ENCODE measurements at regions of chr5 and their contacts with region 1.

Region 1: DNA sequence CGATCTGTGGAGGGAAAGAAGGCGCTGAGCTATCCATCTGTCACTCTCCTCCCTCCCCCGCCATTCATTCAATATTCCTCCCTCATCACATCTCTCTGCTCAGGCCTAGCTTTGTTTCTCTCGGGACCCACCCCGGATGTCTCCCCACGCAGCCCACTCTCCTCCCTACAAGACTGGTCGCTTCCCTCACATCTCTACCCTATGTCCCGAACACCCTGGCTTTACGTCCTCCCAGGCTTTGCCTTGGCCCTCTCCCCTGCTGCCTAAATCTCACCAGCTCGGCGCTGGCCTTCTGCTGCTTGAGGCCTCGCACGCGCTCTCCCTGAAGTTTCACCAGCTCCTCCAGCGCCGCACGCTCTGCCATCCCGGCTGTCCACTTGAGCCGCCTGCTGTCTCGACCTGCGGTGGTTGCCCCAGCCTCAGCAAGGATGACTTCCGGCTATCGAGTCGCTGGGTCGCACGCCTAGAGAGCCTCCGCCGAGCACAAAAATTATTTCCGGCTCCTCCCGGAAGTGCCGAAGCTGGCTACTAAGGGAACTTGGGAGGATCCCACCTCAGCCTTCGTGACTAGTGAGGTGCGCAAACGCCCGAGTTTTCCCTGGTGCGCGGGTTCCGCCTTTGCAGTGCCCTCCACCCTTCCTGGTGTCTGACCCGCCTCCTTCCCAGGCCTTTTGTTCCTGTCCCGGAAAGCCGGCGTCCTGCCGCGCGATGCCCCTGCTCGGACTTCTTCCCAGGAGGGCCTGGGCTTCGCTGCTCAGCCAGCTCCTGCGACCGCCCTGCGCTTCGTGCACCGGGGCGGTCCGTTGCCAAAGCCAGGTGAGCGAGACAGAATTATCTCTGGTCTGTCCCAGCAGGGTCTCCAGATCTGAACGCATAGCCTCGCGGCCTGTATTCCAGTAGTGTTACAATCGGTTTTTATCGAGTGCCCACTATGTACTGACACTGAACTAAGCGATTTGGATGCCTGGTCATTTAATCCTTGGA is at the starts of genes HARS1 and HARS2:
- DNase-seq: peak; percentile 93
- H3K4me3 ChIP-seq: peak within 1 kb of the TSS; percentile 48 to 87 (median 76)
- H3K27ac ChIP-seq: peak within 1 kb of the TSS; percentile 80 to 88 (median 83)
- H3K4me1 ChIP-seq: peaks cover 0 to 35% (median 26%) of the 10 kb centered on the region in 4 donors
- H3K27me3 ChIP-seq: no peaks in the 10 kb centered on the region
- CTCF ChIP-seq: no peak
- EP300 ChIP-seq: no peak
- POLR2A ChIP-seq: peak; percentile 44 to 61
- total RNA-seq, gene HARS1: 35.2 to 54.2 (median 43.5) TPM
- total RNA-seq, gene HARS2: 18.2 to 19.4 (median 18.9) TPM

Region 2: GRCh38 chr5:140401362-140402257 is 289.6 kb before region 1 on chr5 and contains the start of gene ANKHD1:
- intact Hi-C with region 1: loop called (anchors 5 kb)
- DNase-seq: peak; percentile 100
- H3K4me3 ChIP-seq: peak within 1 kb of the TSS; percentile 90 to 98 (median 96)
- H3K27ac ChIP-seq: peak within 1 kb of the TSS; percentile 98 to 99 (median 99)
- H3K4me1 ChIP-seq: peaks cover 0 to 52% (median 43%) of the 10 kb centered on the region in 4 donors
- H3K27me3 ChIP-seq: no peaks in the 10 kb centered on the region
- CTCF ChIP-seq: no peak
- EP300 ChIP-seq: no peak
- POLR2A ChIP-seq: peak; percentile 95 to 96
- total RNA-seq, gene ANKHD1: 93.5 to 109 (median 106) TPM

Region 3: DNA sequence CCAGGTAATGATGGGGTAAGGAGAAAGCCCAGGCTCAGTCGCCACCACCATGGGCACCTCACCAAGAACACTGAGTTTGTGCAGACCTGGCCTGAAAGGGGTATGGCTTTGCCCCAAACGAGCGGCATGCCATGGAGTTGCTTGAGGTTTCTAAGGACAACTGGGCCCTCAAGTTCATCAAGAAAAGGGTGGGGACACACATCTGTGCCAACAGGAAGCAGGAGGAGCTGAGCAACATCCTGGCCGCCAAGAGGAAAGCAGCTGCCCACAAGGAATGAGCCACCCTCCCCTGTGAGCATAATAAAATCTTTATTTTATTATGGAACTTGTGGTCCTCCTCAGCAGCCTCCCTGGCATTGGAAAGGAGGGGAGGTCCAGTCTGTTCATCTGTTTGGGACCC is 82.1 kb before region 1 on chr5:
- intact Hi-C with region 1: no loop called
- DNase-seq: peak; percentile 75
- H3K4me3 ChIP-seq: no peak overlapping the region
- H3K27ac ChIP-seq: peak overlapping the region; percentile 17 to 55 (median 48)
- H3K4me1 ChIP-seq: no peaks in the 10 kb centered on the region
- H3K27me3 ChIP-seq: no peaks in the 10 kb centered on the region
- CTCF ChIP-seq: no peak
- EP300 ChIP-seq: no peak
- POLR2A ChIP-seq: no peak

Region 4: DNA sequence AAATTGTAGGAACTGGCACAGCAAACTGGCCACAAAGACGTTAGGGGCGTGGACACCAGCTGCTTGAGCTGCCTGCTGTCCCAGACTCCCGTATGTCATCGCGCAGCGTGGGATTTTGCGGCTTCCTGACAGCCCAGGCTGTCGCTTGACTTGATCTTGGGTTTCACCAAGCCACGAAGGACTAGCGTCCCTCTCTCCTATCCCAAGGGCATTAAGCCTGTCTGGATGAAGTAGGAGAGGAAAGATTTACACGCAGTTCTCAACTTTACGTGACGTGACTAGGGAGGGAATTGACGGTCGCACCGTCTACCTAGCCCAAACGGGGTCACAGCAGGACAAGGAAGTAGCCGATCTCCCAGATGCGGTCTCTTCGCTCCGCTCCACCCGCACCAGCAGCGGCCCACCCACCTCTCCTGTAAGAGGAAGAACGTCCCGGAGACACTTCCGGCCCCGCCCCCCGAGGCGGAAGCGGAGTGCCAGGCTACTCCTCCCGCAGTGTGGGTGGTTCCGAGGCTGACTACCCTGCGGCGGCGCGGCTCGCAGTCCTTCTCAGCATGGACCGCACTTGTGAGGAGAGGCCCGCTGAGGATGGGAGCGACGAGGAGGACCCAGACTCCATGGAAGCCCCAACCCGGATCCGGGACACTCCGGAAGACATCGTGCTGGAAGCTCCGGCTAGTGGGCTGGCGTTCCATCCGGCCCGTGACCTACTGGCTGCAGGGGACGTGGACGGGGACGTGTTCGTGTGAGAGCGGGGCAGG is 26.7 kb before region 1 on chr5 and contains the start of gene WDR55:
- intact Hi-C with region 1: loop called (anchors 2 kb)
- DNase-seq: peak; percentile 98
- H3K4me3 ChIP-seq: peak within 1 kb of the TSS; percentile 57 to 89 (median 75)
- H3K27ac ChIP-seq: peak within 1 kb of the TSS; percentile 84 to 91 (median 86)
- H3K4me1 ChIP-seq: peaks cover 0 to 25% (median 22%) of the 10 kb centered on the region in 4 donors
- H3K27me3 ChIP-seq: no peaks in the 10 kb centered on the region
- CTCF ChIP-seq: no peak
- EP300 ChIP-seq: no peak
- POLR2A ChIP-seq: peak; percentile 71 to 86
- total RNA-seq, gene WDR55: 13.2 to 18.0 (median 15.1) TPM

Measured in sigmoid colon (tissue), 7 donors.